Activated B cell treated with CpG ODN at 0.5 μM for 24 hours (primary cell): ENCODE measurements at regions of chr16 and their contacts with region 1.

Region 1: GRCh38 chr16:2251483-2252240 is at the start of gene ECI1:
- DNase-seq: peak; percentile 85
- ATAC-seq: peak; percentile 90
- H3K4me3 Mint-ChIP-seq: peak within 1 kb of the TSS; percentile 86
- H3K27ac Mint-ChIP-seq: peak within 1 kb of the TSS; percentile 90
- H3K4me1 Mint-ChIP-seq: peaks cover 35% of the 10 kb centered on the region
- H3K27me3 Mint-ChIP-seq: no peaks in the 10 kb centered on the region
- CTCF ChIP-seq: no peak
- total RNA-seq, gene ECI1: 38.1 and 43.0 TPM in 2 replicates

Region 2: GRCh38 chr16:1863681-1864460 is 387.8 kb before region 1 on chr16:
- CTCF ChIA-PET with region 1: no interaction called
- POLR2A ChIA-PET with region 1: no interaction called
- intact Hi-C with region 1: loop called (anchors 10 kb)
- DNase-seq: no peak
- ATAC-seq: peak; percentile 40
- H3K4me3 Mint-ChIP-seq: no peak overlapping the region
- H3K27ac Mint-ChIP-seq: no peak overlapping the region
- H3K4me1 Mint-ChIP-seq: no peaks in the 10 kb centered on the region
- H3K27me3 Mint-ChIP-seq: peaks cover 23% of the 10 kb centered on the region
- CTCF ChIP-seq: no peak

Region 3: DNA sequence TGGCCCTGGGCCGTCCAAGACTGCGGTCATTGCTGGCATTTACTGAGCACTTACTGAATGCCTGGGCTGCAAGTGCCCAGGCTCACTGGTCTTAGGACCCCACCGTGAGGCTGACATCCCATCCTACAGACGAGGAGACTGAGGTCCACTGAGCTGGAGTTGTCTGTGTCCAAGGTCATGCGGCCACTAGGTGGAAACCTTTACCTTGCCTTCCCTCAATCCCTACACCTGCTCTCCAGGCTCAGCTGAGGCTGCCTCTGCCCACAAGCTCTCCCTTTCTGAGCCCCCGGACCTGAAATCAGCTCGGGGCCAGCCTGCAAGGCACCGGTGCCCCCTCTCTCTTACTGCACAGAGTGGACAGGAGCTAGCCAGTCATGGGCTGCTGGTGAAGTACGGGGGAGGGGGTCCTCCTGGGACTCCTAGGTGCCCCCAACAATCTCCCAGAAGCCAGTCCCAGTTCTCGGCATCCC is 56.8 kb before region 1 on chr16:
- CTCF ChIA-PET with region 1: interaction called, 34 read pairs
- POLR2A ChIA-PET with region 1: interaction called, 17 read pairs
- intact Hi-C with region 1: loop called (anchors 1 kb)
- DNase-seq: no peak
- ATAC-seq: peak; percentile 76
- H3K4me3 Mint-ChIP-seq: peak overlapping the region; percentile 56
- H3K27ac Mint-ChIP-seq: no peak overlapping the region
- H3K4me1 Mint-ChIP-seq: peaks cover 8% of the 10 kb centered on the region
- H3K27me3 Mint-ChIP-seq: peaks cover 19% of the 10 kb centered on the region
- CTCF ChIP-seq: no peak

Region 4: DNA sequence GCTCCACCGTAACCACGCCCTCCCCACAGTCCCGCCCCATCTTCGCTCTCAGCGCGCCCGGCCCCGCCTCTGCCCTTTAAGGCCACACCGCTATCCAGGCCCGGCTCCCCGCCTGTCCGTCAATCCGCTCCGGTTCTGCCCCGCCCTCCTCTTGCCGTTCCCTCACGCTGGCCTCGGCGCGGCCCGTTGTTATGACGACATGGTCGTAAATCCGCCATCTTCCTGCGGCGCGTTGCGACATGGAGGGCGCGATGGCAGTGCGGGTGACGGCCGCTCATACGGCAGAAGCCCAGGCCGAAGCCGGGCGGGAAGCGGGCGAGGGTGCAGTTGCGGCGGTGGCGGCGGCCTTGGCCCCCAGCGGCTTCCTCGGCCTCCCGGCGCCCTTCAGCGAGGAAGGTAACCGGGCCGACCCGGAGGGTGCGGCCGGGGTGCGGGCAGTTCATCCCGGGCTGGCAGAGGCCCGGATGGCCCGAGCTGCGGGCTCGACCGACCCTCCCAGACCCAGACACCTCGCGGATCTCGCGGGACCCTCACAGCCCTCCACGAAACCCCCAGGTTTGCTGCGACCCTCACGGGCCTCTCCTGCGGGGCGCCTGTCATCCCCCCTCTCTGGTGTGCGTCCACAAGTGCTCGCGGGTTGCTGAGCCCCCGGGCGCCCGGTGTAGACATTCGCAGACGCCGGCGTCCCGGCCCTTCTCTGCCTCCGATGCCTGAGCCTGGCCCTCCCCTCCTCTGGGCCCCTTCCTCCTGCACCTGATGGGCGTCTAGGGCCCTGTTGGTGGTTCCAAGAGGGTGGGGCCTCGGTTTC is 28.1 kb before region 1 on chr16 and contains the start of gene E4F1:
- CTCF ChIA-PET with region 1: no interaction called
- POLR2A ChIA-PET with region 1: interaction called, 8 read pairs
- intact Hi-C with region 1: loop called (anchors 1 kb)
- DNase-seq: peak; percentile 98
- ATAC-seq: peak; percentile 98
- H3K4me3 Mint-ChIP-seq: peak within 1 kb of the TSS; percentile 81
- H3K27ac Mint-ChIP-seq: peak within 1 kb of the TSS; percentile 59
- H3K4me1 Mint-ChIP-seq: peaks cover 20% of the 10 kb centered on the region
- H3K27me3 Mint-ChIP-seq: no peaks in the 10 kb centered on the region
- CTCF ChIP-seq: no peak
- total RNA-seq, gene E4F1: 29.9 and 31.3 TPM in 2 replicates

Region 5: DNA sequence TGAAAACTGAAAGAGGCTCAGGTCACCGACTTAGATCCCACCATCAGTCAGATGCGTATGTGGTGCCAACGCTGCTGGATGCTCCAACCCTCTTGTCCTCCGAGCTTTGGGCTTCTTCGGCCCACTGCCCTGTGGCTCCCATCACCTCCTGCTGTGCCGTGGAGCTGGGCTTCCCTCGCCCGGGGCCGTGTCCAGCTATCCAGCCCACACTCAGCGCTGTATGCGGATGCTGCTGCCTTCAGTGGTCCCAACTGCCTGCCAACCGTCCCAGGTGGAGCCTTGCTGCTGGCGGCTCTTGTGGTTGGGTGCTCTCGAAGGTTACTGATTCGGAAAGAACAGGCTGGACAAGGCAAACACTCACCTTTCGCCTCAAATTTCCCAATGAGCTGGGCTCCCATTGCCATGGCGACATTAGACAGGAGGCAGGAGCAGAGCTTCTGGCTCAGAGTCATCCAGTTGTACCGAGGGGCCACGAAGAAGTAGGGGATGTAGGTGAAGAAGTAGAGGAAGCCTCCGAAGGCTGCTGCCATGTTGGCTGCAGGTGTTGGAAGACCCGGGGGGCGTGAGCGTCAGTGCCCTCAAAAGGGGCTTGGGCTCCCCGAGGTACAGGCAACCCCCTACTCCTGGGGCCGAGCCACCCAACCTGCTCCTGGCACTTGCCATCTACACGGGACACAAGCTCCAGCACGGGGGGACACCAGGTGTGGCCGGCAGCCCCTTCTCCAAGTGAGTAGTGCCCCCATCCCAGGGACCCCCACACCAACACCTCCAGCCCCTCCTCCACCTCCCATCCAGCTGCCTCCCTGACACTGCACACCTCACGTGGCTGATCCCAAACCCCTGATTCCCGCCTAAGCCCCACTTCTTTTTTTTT is 56.7 kb after region 1 on chr16:
- CTCF ChIA-PET with region 1: no interaction called
- POLR2A ChIA-PET with region 1: no interaction called
- intact Hi-C with region 1: no loop called
- DNase-seq: no peak
- ATAC-seq: no peak
- H3K4me3 Mint-ChIP-seq: no peak overlapping the region
- H3K27ac Mint-ChIP-seq: no peak overlapping the region
- H3K4me1 Mint-ChIP-seq: no peaks in the 10 kb centered on the region
- H3K27me3 Mint-ChIP-seq: no peaks in the 10 kb centered on the region
- CTCF ChIP-seq: no peak

Region 6: GRCh38 chr16:2340564-2341455 is 89.1 kb after region 1 on chr16 and contains the start of gene ABCA3:
- CTCF ChIA-PET with region 1: no interaction called
- POLR2A ChIA-PET with region 1: no interaction called
- intact Hi-C with region 1: loop called (anchors 2 kb)
- DNase-seq: peak; percentile 99
- ATAC-seq: peak; percentile 84
- H3K4me3 Mint-ChIP-seq: peak within 1 kb of the TSS; percentile 79
- H3K27ac Mint-ChIP-seq: peak within 1 kb of the TSS; percentile 66
- H3K4me1 Mint-ChIP-seq: peaks cover 13% of the 10 kb centered on the region
- H3K27me3 Mint-ChIP-seq: no peaks in the 10 kb centered on the region
- CTCF ChIP-seq: peak; percentile 95
- total RNA-seq, gene ABCA3: 2.4 and 3.1 TPM in 2 replicates

Region 7: DNA sequence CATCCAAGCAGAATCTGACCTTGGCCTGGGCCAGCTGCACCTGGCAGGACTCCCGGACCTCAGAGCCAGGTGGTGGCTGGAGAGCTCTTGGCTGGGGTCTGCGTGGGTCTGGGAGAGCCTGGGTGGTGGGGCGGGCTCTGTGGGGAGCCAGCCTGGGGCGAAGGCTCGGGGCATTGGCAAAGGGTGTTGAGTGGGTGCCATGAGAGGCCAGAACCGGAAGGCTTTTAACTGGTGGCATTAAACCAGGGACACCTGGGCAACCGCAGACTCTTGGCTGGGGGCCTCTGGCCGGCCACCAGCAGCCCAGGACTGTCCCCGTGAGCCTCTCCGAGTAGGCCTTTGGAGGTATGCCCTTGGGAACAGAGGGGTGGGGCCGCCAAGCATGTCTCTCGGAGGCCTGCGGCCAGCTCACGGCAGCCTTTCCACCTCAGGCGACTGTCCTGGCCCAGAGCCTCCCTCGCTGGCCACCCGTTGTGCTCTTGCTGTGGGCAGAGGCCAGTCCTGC is 451.6 kb after region 1 on chr16:
- CTCF ChIA-PET with region 1: no interaction called
- POLR2A ChIA-PET with region 1: no interaction called
- intact Hi-C with region 1: no loop called
- DNase-seq: no peak
- ATAC-seq: no peak
- H3K4me3 Mint-ChIP-seq: no peak overlapping the region
- H3K27ac Mint-ChIP-seq: no peak overlapping the region
- H3K4me1 Mint-ChIP-seq: no peaks in the 10 kb centered on the region
- H3K27me3 Mint-ChIP-seq: no peaks in the 10 kb centered on the region
- CTCF ChIP-seq: no peak